ENCODE measurements at regions of chr22 and their contacts with region 1.

Region 1: DNA sequence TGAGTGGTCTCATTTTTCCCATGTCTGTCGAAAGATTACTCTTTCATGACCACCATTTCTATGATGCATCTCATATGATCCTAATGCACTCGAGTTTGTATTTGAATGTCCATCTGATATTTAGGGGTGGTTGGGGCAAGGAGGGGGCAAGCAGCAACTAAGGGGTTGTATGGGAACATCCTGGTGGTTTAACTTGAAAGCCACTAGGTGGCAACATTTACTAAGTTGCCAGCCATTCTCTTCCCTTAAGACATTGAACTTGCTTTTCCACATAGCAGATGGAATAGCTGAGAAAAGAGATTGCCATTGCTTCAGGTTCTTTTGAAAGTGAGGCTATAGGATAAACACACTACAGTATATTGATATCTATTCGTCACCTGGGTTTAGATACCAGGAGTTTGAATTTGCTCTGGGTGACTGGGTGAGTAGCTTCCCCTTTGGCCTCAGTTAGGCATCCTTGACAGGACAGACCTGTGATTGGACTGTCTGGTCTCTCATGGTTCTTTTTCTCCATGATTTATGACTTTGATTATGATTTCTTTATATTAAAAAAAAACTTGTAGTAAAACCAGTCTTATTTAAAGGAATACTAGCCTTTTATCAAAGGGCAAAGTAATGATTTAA is 32.4 kb downstream of the NF2 start:
- DNase-seq: peak; percentile 64
- H3K4me3 ChIP-seq: no peak overlapping the region
- H3K27ac ChIP-seq: no peak overlapping the region
- H3K4me1 ChIP-seq: peaks cover 50% of the 10 kb centered on the region
- H3K27me3 ChIP-seq: no peaks in the 10 kb centered on the region
- CTCF ChIP-seq: peak; percentile 60 to 65
- POLR2A ChIP-seq: no peak

Region 2: GRCh38 chr22:29487426-29487986 is 148.3 kb before region 1 on chr22:
- CTCF ChIA-PET with region 1: no interaction called
- POLR2A ChIA-PET with region 1: no interaction called
- dilution Hi-C with region 1: no loop called
- intact Hi-C with region 1: no loop called
- DNase-seq: no peak
- H3K4me3 ChIP-seq: no peak overlapping the region
- H3K27ac ChIP-seq: no peak overlapping the region
- H3K4me1 ChIP-seq: no peaks in the 10 kb centered on the region
- H3K27me3 ChIP-seq: no peaks in the 10 kb centered on the region
- CTCF ChIP-seq: no peak
- POLR2A ChIP-seq: no peak

Region 3: DNA sequence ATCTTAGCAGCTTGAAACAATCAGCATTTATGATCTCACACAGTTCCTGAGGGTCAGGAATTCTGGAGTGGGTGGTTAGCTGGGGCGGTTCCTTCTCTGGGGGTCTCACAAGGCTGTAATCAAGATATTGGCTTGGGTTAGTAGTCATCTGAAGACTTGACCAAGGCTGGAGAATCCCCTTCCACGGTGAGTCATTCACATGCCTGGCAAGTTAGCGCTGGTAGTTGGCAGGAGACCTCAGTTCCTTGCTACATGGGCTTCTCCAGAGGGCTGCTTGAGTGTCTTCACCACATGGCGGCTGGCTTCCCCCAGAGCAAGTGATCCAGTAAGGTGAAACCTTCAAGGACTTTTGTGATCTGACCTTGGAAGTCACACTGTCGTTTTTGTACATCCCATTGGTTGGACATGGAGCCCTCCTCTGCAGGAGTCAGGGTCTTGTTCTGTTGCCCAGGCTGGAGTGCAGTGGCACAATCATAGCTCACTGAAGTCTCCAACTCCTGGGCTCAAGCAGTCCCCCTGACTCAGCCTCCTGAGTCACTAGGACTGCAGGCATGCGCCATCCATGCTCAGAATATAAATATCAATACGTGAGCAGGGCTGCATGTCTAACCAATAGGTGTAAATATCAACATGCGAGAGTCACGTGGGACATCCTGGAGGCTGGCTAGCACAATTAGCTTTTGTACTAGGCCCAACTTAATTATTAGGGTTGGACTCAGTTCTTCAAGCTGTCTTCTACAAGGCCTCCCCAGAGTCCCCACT is 47.7 kb before region 1 on chr22:
- CTCF ChIA-PET with region 1: interaction called, 28 read pairs
- POLR2A ChIA-PET with region 1: no interaction called
- dilution Hi-C with region 1: no loop called
- intact Hi-C with region 1: loop called (anchors 1 kb)
- DNase-seq: peak; percentile 42
- H3K4me3 ChIP-seq: no peak overlapping the region
- H3K27ac ChIP-seq: no peak overlapping the region
- H3K4me1 ChIP-seq: no peaks in the 10 kb centered on the region
- H3K27me3 ChIP-seq: no peaks in the 10 kb centered on the region
- CTCF ChIP-seq: no peak
- POLR2A ChIP-seq: no peak

Region 4: DNA sequence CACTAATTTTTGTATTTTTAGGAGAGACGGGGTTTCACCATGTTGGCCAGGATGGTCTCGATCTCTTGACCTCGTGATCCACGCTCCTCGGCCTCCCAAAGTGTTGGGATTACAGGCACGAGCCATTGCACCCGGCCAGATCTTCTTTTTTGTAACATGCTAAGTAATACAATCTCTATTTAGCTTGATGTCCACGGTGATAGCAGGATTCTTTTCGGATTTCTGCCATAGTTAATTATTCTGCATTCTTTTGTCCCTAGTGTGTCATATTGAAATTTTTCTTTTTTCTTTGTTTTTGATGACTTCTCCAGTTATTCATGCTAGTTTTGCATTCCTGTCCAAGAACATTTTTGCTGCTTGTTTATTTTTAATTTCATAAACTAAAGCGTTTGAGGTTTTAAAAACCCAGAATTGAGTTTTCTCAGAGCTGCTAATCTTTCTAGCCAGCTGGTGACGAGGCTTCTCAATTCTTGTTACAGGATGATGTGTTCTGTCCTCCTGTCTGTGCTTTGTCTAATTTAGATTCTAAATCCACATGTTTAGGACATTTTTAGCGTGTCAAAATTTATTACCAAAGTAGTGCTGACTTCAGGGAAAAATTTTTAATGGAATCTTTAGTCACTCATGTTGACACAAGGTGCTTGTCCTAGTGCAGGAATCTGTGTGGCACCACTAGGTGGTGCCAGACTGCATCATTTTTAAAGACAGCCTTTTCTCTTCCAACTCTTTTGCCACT is 10.6 kb before region 1 on chr22:
- CTCF ChIA-PET with region 1: interaction called, 57 read pairs
- POLR2A ChIA-PET with region 1: no interaction called
- dilution Hi-C with region 1: no loop called
- intact Hi-C with region 1: loop called (anchors 1 kb)
- DNase-seq: peak; percentile 78
- H3K4me3 ChIP-seq: no peak overlapping the region
- H3K27ac ChIP-seq: peak overlapping the region; percentile 98
- H3K4me1 ChIP-seq: peaks cover 80% of the 10 kb centered on the region
- H3K27me3 ChIP-seq: no peaks in the 10 kb centered on the region
- CTCF ChIP-seq: peak; percentile 78 to 89
- POLR2A ChIP-seq: no peak

Region 5: GRCh38 chr22:29663180-29663821 is 27.5 kb after region 1 on chr22:
- CTCF ChIA-PET with region 1: interaction called, 17 read pairs
- POLR2A ChIA-PET with region 1: no interaction called
- dilution Hi-C with region 1: no loop called
- intact Hi-C with region 1: no loop called
- DNase-seq: no peak
- H3K4me3 ChIP-seq: no peak overlapping the region
- H3K27ac ChIP-seq: no peak overlapping the region
- H3K4me1 ChIP-seq: peaks cover 10% of the 10 kb centered on the region
- H3K27me3 ChIP-seq: no peaks in the 10 kb centered on the region
- CTCF ChIP-seq: no peak
- POLR2A ChIP-seq: no peak

Region 6: DNA sequence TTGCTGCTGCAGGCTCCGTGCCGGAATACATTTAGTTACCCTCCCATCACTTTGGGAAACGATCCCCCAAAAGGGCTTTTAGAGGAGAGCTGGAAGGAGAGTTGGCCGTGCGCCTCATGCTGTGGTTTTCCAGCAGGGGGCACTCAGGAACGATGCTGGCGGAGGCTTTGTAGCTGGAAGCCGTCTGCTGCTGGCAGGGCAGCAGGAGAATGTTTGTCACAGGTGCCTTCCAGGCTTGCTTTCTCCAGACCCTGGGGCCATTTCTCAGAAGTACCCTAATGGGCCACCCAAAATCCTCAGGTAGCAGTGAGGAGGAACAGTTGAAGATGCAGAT is 54.0 kb after region 1 on chr22:
- CTCF ChIA-PET with region 1: interaction called, 24 read pairs
- POLR2A ChIA-PET with region 1: no interaction called
- dilution Hi-C with region 1: no loop called
- intact Hi-C with region 1: no loop called
- DNase-seq: peak; percentile 43
- H3K4me3 ChIP-seq: no peak overlapping the region
- H3K27ac ChIP-seq: no peak overlapping the region
- H3K4me1 ChIP-seq: no peaks in the 10 kb centered on the region
- H3K27me3 ChIP-seq: no peaks in the 10 kb centered on the region
- CTCF ChIP-seq: peak; percentile 73 to 83
- POLR2A ChIP-seq: no peak

Region 7: DNA sequence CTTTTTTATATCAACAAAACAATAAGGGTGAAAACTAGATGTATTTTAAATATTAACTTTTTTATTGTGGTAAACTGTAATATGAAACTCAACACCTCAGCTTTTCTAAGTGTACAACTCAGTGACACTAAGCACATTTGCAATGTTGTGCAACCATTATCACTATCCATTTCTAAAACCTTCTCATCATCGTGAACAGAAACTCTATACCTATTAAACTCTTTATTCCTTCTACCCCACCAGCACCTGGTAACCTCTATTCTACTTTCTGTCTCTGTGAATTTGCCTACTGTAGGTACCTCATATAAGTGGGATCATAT is 453.8 kb after region 1 on chr22:
- CTCF ChIA-PET with region 1: interaction called, 39 read pairs
- POLR2A ChIA-PET with region 1: no interaction called
- dilution Hi-C with region 1: no loop called
- intact Hi-C with region 1: loop called (anchors 1 kb)
- DNase-seq: no peak
- H3K4me3 ChIP-seq: no peak overlapping the region
- H3K27ac ChIP-seq: no peak overlapping the region
- H3K4me1 ChIP-seq: no peaks in the 10 kb centered on the region
- H3K27me3 ChIP-seq: peaks cover 4 to 10% of the 10 kb centered on the region in 2 experiments
- CTCF ChIP-seq: no peak
- POLR2A ChIP-seq: no peak